ENCODE measurements at regions of chr1 and their contacts with region 1.

Region 1: DNA sequence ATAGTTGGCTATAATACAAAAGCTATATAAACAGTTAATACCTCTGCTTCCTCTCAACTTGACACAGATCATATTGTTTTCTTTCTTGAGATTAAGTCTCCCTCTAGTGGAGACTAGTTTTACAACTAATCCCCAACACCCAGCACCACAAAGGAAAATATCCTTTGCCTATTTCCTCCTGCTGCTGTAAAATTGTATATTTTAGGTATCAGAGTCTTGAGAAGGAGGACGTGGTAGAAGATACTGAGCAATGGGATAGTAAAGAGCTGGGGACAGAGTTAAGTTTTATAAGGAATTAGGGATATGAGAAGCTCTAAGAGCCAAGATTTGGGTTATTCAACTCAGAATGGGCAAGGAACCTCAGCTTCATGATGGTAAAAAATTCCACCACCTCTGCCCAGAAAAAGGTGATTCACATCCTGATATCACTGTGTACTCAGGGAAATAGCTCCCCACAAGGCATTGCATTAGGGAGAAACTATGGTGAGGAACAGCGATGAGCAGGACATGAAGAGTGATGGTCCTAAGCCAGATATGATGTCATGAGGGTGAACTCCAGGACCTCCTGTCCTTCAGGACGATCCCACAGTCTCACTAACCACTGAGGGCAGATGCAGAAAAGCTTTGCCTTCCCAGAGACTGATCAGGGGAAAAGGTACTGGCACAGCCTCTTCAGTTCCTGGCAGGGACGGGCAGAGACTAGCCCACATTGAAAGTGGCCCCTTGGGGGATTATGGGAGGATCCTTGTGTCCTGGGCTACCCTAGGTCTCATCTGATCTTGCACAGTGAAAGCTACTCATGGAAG is 14.7 kb upstream of the CFAP126 start:
- DNase-seq: peak; percentile 58 to 73
- ATAC-seq: peak; percentile 90 to 92
- H3K4me3 ChIP-seq: no peak overlapping the region
- H3K27ac ChIP-seq: peak overlapping the region; percentile 61 to 73
- H3K4me1 ChIP-seq: peaks cover 11% of the 10 kb centered on the region
- CTCF ChIP-seq: peak; percentile 81
- EP300 ChIP-seq: no peak
- POLR2A ChIP-seq: no peak
- RAD21 ChIP-seq: peak; percentile 78 to 80

Region 2: DNA sequence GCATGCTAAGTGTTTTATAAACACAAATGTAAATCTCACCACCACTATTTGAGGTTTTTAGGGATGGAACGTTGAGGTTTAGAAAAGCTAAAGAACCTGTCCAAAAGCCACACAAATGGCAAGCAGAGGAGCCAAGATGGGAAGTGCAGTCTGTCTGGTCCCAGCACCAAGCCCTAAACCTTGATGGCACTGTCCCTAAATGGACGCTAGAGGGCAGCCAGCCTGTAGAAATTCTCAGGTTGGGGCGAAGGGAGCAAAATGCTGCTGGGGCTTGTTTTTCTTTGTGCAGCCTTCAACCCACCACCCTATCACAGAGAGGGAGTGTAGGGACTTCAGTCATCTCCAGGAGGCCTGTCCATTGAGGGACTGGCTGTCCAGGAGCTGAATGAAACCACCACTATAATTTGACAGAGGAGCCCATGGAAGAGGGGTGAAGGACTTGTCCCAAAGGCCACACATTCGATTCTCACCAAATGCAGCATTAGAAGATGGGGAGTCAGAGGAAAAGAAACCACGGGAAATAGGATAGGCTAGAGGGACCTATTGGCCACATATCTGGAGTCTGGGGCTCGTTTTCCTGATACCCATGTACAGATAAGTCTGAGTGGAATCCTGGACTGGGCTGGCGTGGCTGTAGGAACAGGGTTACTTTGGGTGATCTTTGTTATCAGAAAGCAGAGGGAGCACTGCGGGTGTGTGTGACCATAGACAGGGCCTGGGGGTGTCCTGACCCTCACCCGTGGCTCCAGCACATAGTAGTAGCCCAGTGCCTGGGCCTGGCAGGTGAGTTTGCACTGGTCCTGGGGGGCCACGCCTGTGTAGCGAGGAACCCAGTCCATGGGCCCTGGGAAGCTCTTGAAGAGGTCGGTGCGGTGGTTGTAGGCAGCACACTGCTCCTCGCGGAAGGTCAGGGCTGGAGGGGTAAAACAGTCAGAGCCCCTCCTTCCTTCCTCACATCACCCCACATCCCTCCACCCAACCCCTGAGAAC is 189.6 kb before region 1 on chr1:
- CTCF ChIA-PET with region 1: interaction called, 200 read pairs
- POLR2A ChIA-PET with region 1: interaction called, 4 read pairs
- DNase-seq: peak; percentile 72 to 84
- ATAC-seq: peak; percentile 88 to 93
- H3K4me3 ChIP-seq: no peak overlapping the region
- H3K27ac ChIP-seq: no peak overlapping the region
- H3K4me1 ChIP-seq: no peaks in the 10 kb centered on the region
- CTCF ChIP-seq: peak; percentile 81
- EP300 ChIP-seq: no peak
- POLR2A ChIP-seq: no peak
- RAD21 ChIP-seq: peak; percentile 62 to 73

Region 3: DNA sequence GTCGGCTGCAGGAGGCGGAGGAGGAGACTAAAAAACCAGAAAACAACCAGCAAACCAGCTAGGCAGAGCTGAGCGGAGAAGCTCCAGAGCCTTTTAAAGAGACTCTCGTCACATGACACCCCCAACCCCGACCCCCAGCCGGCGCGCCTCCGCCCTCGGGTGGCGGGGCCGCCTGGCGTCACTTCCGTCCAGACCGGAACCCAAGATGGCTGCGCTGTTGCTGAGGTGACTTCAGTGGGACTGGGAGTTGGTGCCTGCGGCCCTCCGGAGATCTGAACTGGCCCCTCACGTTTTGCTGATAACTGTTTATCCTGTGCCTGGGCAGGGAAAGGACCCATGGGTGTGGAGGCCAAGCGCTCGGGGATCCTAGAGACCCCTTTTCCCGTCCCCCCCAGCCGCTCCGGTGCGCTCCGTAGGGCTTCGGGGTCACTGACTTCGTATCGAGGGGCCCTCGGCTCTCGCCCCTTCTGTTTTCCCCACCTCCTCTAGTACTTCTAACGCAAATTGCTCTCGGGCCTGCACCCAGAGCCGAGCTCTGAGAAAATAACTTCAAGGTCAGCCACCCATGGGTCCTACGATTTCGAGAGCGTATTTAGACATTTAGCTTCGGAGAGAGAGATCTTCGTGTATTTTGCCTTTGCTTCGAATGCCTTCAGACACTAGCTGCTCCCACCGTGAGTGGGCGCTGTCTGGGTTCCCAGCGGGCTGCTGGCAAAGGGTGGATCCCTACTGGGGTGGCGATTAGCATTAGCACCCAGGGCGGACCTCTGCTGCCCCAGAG is 68.0 kb before region 1 on chr1 and contains the start of gene SDHC:
- CTCF ChIA-PET with region 1: interaction called, 10 read pairs
- POLR2A ChIA-PET with region 1: no interaction called
- DNase-seq: peak; percentile 83 to 92
- ATAC-seq: peak; percentile 98
- H3K4me3 ChIP-seq: peak within 1 kb of the TSS; percentile 59
- H3K27ac ChIP-seq: peak within 1 kb of the TSS; percentile 83 to 96
- H3K4me1 ChIP-seq: peaks cover 7% of the 10 kb centered on the region; the same call in 2 of the 3 replicates
- CTCF ChIP-seq: no peak; the same call in 2 of the 3 replicates
- EP300 ChIP-seq: no peak
- POLR2A ChIP-seq: peak; percentile 94
- RAD21 ChIP-seq: no peak
- polyA plus RNA-seq, gene SDHC: 296 and 353 TPM in 2 replicates

Region 4: GRCh38 chr1:161357073-161357472 is 25.3 kb before region 1 on chr1:
- CTCF ChIA-PET with region 1: interaction called, 13 read pairs
- POLR2A ChIA-PET with region 1: no interaction called
- DNase-seq: peak in 1 of 2 experiments; percentile 13
- ATAC-seq: no peak
- H3K4me3 ChIP-seq: no peak overlapping the region
- H3K27ac ChIP-seq: no peak overlapping the region
- H3K4me1 ChIP-seq: no peaks in the 10 kb centered on the region
- CTCF ChIP-seq: no peak
- EP300 ChIP-seq: no peak
- POLR2A ChIP-seq: no peak
- RAD21 ChIP-seq: no peak

Region 5: GRCh38 chr1:161399257-161399998 is 17.0 kb after region 1 on chr1:
- CTCF ChIA-PET with region 1: interaction called, 11 read pairs
- POLR2A ChIA-PET with region 1: no interaction called
- DNase-seq: peak; percentile 93 to 96
- ATAC-seq: peak; percentile 85 to 87
- H3K4me3 ChIP-seq: peak overlapping the region; percentile 68
- H3K27ac ChIP-seq: peak overlapping the region; percentile 94 to 97
- H3K4me1 ChIP-seq: peaks cover 21% of the 10 kb centered on the region
- CTCF ChIP-seq: no peak; the same call in 2 of the 3 replicates
- EP300 ChIP-seq: no peak
- POLR2A ChIP-seq: peak; percentile 73
- RAD21 ChIP-seq: no peak; a peak in 1 of 5 replicates